Spleen (tissue), 13 donors: ENCODE measurements at regions of chr12 and their contacts with region 1.

Region 1: GRCh38 chr12:96985480-96986362 is 78.7 kb downstream of the NEDD1 start:
- DNase-seq: peak; percentile 83
- H3K4me3 ChIP-seq: peak overlapping the region; percentile 13 to 66 (median 38)
- H3K27ac ChIP-seq: no peak overlapping the region
- H3K4me1 ChIP-seq: peaks cover 0 to 15% (median 11%) of the 10 kb centered on the region in 6 donors
- H3K27me3 ChIP-seq: peaks cover 0 to 38% (median 10%) of the 10 kb centered on the region in 7 donors
- CTCF ChIP-seq: peak in 9 of 11 experiments; percentile 4 to 90 (median 83)
- POLR2A ChIP-seq: no peak

Region 2: GRCh38 chr12:95755261-95755865 is 1230.4 kb before region 1 on chr12:
- intact Hi-C with region 1: no loop called
- DNase-seq: no peak
- H3K4me3 ChIP-seq: no peak overlapping the region
- H3K27ac ChIP-seq: peak overlapping the region in 6 of 8 donors; percentile 5 to 32 (median 17)
- H3K4me1 ChIP-seq: peaks cover 0 to 20% (median 0%) of the 10 kb centered on the region in 6 donors
- H3K27me3 ChIP-seq: no peaks in the 10 kb centered on the region
- CTCF ChIP-seq: no peak
- POLR2A ChIP-seq: no peak

Region 3: DNA sequence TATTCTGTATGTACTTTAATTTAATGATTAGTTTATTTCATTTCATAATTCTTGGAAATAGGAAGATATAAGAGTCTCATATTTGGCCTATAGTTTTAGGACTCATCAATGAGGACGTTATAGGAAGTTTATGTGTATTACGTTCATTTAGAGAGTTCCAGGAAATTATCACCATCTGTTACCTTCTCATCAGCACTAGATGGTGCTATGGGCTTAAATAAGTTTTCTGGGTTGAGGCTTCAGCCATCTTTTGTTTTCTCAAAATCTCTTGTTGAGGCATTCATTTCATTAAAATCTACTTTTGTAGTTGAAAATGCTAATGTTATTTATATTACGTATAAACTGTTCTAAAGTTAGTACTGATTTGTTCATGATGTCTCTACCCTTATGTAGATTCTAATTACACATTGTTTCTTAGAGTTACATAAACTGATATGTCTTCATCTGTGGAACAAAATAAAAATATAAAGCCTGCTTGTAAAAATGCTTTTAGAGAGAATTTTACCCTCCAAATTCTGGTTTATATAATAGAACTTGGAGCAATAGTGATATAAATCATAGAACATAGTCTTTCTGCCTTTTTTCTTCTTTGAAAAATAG is 407.1 kb before region 1 on chr12:
- intact Hi-C with region 1: loop called (anchors 5 kb)
- DNase-seq: no peak
- H3K4me3 ChIP-seq: no peak overlapping the region
- H3K27ac ChIP-seq: no peak overlapping the region
- H3K4me1 ChIP-seq: peaks cover 0 to 10% (median 3%) of the 10 kb centered on the region in 6 donors
- H3K27me3 ChIP-seq: no peaks in the 10 kb centered on the region
- CTCF ChIP-seq: peak; percentile 27 to 73 (median 57)
- POLR2A ChIP-seq: no peak

Region 4: GRCh38 chr12:96919510-96920210 is 66.1 kb before region 1 on chr12:
- intact Hi-C with region 1: no loop called
- DNase-seq: no peak
- H3K4me3 ChIP-seq: no peak overlapping the region
- H3K27ac ChIP-seq: no peak overlapping the region
- H3K4me1 ChIP-seq: peaks cover 0 to 4% (median 0%) of the 10 kb centered on the region in 6 donors
- H3K27me3 ChIP-seq: no peaks in the 10 kb centered on the region
- CTCF ChIP-seq: no peak
- POLR2A ChIP-seq: no peak

Region 5: GRCh38 chr12:97048421-97049035 is 62.8 kb after region 1 on chr12:
- intact Hi-C with region 1: no loop called
- DNase-seq: no peak
- H3K4me3 ChIP-seq: no peak overlapping the region
- H3K27ac ChIP-seq: peak overlapping the region in 3 of 8 donors; percentile 26 to 37 (median 27)
- H3K4me1 ChIP-seq: no peaks in the 10 kb centered on the region
- H3K27me3 ChIP-seq: no peaks in the 10 kb centered on the region
- CTCF ChIP-seq: no peak
- POLR2A ChIP-seq: no peak